ENCODE measurements at regions of chr22 and their contacts with region 1.

Region 1: DNA sequence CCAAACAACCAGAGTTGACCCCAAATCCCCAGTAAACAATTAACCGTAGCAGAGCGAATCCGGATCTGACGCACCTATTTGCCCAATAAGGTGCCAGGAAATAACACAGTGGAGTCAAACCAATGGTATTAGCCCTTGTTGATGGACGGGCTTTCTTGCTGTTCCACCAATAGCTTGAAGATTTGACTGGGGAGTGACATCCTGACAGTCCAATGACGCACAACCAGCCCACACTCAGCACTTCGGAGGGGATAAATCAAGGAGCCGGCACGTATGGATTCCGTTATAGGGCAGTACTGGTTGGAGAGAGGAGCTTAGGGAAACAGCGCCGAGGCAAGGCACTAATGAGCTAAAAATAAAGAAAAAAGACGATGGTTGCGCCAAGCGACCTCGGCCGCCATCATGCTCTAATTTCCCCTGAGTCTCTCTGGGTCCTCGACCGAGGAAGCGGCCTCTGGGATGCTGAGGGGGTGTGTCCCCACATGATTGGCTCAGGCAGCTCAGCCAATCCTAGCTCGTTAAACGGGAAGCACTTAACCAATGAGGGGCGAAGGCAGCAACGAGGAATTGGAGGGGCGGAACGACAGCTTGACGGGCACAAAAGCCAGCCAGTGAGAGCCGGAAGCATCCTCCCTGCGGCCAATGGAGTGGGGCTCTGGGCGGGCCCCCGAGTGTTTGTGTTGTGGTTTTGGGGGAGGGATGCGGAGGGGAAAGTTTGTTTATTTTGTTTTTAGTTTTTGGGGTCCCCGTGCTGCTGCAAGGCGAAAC is 49.5 kb downstream of the FAM83F start:
- DNase-seq: peak in 1 of 2 donors; percentile 100
- H3K4me3 ChIP-seq: peak overlapping the region; percentile 75 to 76
- H3K27ac ChIP-seq: peak overlapping the region; percentile 88
- H3K4me1 ChIP-seq: peaks cover 75% of the 10 kb centered on the region
- H3K27me3 ChIP-seq: no peaks in the 10 kb centered on the region
- CTCF ChIP-seq: no peak
- POLR2A ChIP-seq: peak in 1 of 2 donors; percentile 33

Region 2: GRCh38 chr22:40084246-40084645 is 40.0 kb after region 1 on chr22:
- intact Hi-C with region 1: no loop called
- DNase-seq: no peak
- H3K4me3 ChIP-seq: no peak overlapping the region
- H3K27ac ChIP-seq: no peak overlapping the region
- H3K4me1 ChIP-seq: peaks cover 20% of the 10 kb centered on the region
- H3K27me3 ChIP-seq: no peaks in the 10 kb centered on the region
- CTCF ChIP-seq: no peak
- POLR2A ChIP-seq: no peak

Region 3: GRCh38 chr22:40177738-40178416 is 133.6 kb after region 1 on chr22 and contains the start of gene TNRC6B:
- intact Hi-C with region 1: loop called (anchors 10 kb)
- DNase-seq: peak in 1 of 2 donors; percentile 95
- H3K4me3 ChIP-seq: peak within 1 kb of the TSS; percentile 49 to 59
- H3K27ac ChIP-seq: peak within 1 kb of the TSS; percentile 83
- H3K4me1 ChIP-seq: peaks cover 65% of the 10 kb centered on the region
- H3K27me3 ChIP-seq: no peaks in the 10 kb centered on the region
- CTCF ChIP-seq: peak in 1 of 3 experiments; percentile 19
- POLR2A ChIP-seq: peak in 1 of 2 donors; percentile 98
- total RNA-seq, gene TNRC6B: 32.7 TPM

Region 4: DNA sequence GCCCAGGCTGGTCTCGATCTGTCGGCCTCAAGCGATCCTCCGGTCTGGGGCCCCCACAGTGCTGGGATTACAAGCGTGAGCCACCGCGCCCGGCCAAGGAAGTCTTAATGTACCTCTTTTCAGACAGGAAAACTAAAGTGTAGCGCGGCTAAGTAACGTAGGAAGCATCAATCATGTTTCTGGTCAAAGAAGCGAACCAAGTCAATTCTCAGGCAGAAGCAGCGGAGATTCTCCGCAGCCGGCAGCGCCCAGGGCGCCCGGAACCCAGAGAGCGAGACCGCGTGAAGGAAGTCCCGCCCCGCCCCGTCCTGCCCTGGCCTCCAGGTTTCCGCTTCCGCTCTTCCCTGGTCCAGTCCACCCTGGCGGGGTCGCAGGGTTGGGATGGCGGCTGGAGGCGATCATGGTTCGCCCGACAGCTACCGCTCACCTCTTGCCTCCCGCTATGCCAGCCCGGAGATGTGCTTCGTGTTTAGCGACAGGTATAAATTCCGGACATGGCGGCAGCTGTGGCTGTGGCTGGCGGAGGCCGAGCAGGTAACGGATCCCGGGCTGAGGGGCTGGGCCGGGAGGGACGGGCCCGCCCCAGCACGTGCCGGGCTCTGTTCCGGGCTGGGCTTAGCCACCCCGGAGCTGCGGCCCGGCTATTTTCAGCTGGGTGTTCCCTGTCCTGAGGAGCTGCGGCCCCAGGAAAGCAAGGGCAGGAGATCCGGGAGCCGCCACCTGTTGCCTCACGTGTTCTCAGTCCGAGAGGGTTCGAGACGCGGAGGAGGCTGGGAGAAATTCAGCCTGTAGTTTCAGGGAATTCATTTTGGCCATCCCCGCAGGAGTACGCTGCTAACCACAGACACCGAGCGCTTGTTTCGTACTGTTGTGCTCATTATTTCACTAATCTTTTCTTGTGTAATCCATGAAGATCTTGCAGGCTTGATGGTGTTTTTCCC is 302.2 kb after region 1 on chr22 and contains the start of gene ADSL:
- intact Hi-C with region 1: loop called (anchors 5 kb)
- DNase-seq: no peak
- H3K4me3 ChIP-seq: peak within 1 kb of the TSS; percentile 58 to 68
- H3K27ac ChIP-seq: peak within 1 kb of the TSS; percentile 86
- H3K4me1 ChIP-seq: peaks cover 26% of the 10 kb centered on the region
- H3K27me3 ChIP-seq: no peaks in the 10 kb centered on the region
- CTCF ChIP-seq: no peak
- POLR2A ChIP-seq: peak in 1 of 2 donors; percentile 60
- total RNA-seq, gene ADSL: 41.0 TPM